ENCODE measurements at regions of chr4 and their contacts with region 1.

Region 1: GRCh38 chr4:373062-373839 is 35.6 kb downstream of the ZNF141 start:
- H3K4me3 Mint-ChIP-seq: no peak overlapping the region
- H3K27ac Mint-ChIP-seq: no peak overlapping the region
- H3K4me1 Mint-ChIP-seq: no peaks in the 10 kb centered on the region
- H3K27me3 Mint-ChIP-seq: no peaks in the 10 kb centered on the region

Region 2: GRCh38 chr4:188076-188475 is 185.2 kb before region 1 on chr4:
- intact Hi-C with region 1: no loop called
- H3K4me3 Mint-ChIP-seq: no peak overlapping the region
- H3K27ac Mint-ChIP-seq: no peak overlapping the region
- H3K4me1 Mint-ChIP-seq: no peaks in the 10 kb centered on the region
- H3K27me3 Mint-ChIP-seq: no peaks in the 10 kb centered on the region

Region 3: GRCh38 chr4:328729-329128 is 44.5 kb before region 1 on chr4:
- intact Hi-C with region 1: no loop called
- H3K4me3 Mint-ChIP-seq: no peak overlapping the region
- H3K27ac Mint-ChIP-seq: no peak overlapping the region
- H3K4me1 Mint-ChIP-seq: no peaks in the 10 kb centered on the region
- H3K27me3 Mint-ChIP-seq: no peaks in the 10 kb centered on the region

Region 4: GRCh38 chr4:422587-422986 is 49.3 kb after region 1 on chr4:
- intact Hi-C with region 1: no loop called
- H3K4me3 Mint-ChIP-seq: no peak overlapping the region
- H3K27ac Mint-ChIP-seq: no peak overlapping the region
- H3K4me1 Mint-ChIP-seq: no peaks in the 10 kb centered on the region
- H3K27me3 Mint-ChIP-seq: no peaks in the 10 kb centered on the region

Region 5: GRCh38 chr4:445410-445809 is 72.2 kb after region 1 on chr4:
- intact Hi-C with region 1: loop called (anchors 5 kb)
- H3K4me3 Mint-ChIP-seq: no peak overlapping the region
- H3K27ac Mint-ChIP-seq: no peak overlapping the region
- H3K4me1 Mint-ChIP-seq: no peaks in the 10 kb centered on the region
- H3K27me3 Mint-ChIP-seq: no peaks in the 10 kb centered on the region

Measured in dendritic cell treated with granulocyte-macrophage colony-stimulating factor and Interleukin-4, amounts not matched to agents 40 ng/mL and 50 ng/mL, for 4 days (primary cell).